Naive thymus-derived CD4-positive, alpha-beta T cell (primary cell): ENCODE measurements at regions of chr4 and their contacts with region 1.

Region 1: GRCh38 chr4:57789666-57790065 is 679.5 kb upstream of the IGFBP7 start:
- DNase-seq: no peak
- ATAC-seq: no peak
- H3K4me3 ChIP-seq: no peak overlapping the region
- H3K4me3 Mint-ChIP-seq: no peak overlapping the region
- H3K27ac ChIP-seq: no peak overlapping the region
- H3K27ac Mint-ChIP-seq: no peak overlapping the region
- H3K4me1 ChIP-seq: no peaks in the 10 kb centered on the region
- H3K4me1 Mint-ChIP-seq: no peaks in the 10 kb centered on the region
- H3K27me3 ChIP-seq: no peaks in the 10 kb centered on the region
- H3K27me3 Mint-ChIP-seq: no peaks in the 10 kb centered on the region

Region 2: GRCh38 chr4:57020467-57021101 is 769.1 kb before region 1 on chr4:
- CTCF ChIA-PET with region 1: no interaction called
- POLR2A ChIA-PET with region 1: no interaction called
- intact Hi-C with region 1: no loop called
- DNase-seq: no peak
- ATAC-seq: no peak
- H3K4me3 ChIP-seq: no peak overlapping the region
- H3K4me3 Mint-ChIP-seq: no peak overlapping the region
- H3K27ac ChIP-seq: no peak overlapping the region
- H3K27ac Mint-ChIP-seq: peak overlapping the region in 3 of 9 donors; percentile 30 to 62 (median 55)
- H3K4me1 ChIP-seq: no peaks in the 10 kb centered on the region
- H3K4me1 Mint-ChIP-seq: peaks cover 0 to 18% (median 3%) of the 10 kb centered on the region in 7 donors
- H3K27me3 ChIP-seq: no peaks in the 10 kb centered on the region
- H3K27me3 Mint-ChIP-seq: no peaks in the 10 kb centered on the region

Region 3: DNA sequence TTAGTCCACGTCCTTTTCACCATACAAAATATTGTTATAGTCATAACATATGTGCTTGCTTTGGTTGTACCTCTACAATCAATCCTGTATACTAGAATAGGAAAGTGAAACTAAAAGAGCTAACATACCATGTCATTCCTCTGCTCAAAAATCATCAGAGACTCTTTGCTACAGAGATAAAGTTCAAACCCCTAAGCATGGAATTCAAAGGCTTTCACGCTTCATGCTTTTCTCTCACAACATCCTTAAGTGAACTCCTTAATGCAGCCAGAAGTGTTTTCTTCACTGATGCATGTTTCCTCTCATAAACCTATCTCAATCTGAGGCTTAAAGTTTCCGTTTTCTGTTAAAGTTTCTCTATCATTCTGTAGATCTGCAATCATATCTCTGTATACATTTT is 65.1 kb after region 1 on chr4:
- CTCF ChIA-PET with region 1: no interaction called
- POLR2A ChIA-PET with region 1: no interaction called
- intact Hi-C with region 1: loop called in 1 of 2 experiments (anchors 10 kb)
- DNase-seq: no peak
- ATAC-seq: no peak
- H3K4me3 ChIP-seq: no peak overlapping the region
- H3K4me3 Mint-ChIP-seq: peak overlapping the region in 2 of 10 donors; percentile 22 to 25
- H3K27ac ChIP-seq: no peak overlapping the region
- H3K27ac Mint-ChIP-seq: no peak overlapping the region
- H3K4me1 ChIP-seq: no peaks in the 10 kb centered on the region
- H3K4me1 Mint-ChIP-seq: no peaks in the 10 kb centered on the region
- H3K27me3 ChIP-seq: no peaks in the 10 kb centered on the region
- H3K27me3 Mint-ChIP-seq: no peaks in the 10 kb centered on the region